ENCODE measurements at regions of chr20 and their contacts with region 1.

Region 1: GRCh38 chr20:37095599-37096414 is at the start of gene RBL1:
- DNase-seq: peak; percentile 60 to 81
- H3K4me3 ChIP-seq: peak within 1 kb of the TSS; percentile 99
- H3K27ac ChIP-seq: no peak within 1 kb of the TSS
- H3K4me1 ChIP-seq: peaks cover 14% of the 10 kb centered on the region
- H3K27me3 ChIP-seq: no peaks in the 10 kb centered on the region
- CTCF ChIP-seq: no peak; the same call in 1 of the 2 replicates
- total RNA-seq, gene RBL1: 14.6 and 23.0 TPM in 2 replicates

Region 2: DNA sequence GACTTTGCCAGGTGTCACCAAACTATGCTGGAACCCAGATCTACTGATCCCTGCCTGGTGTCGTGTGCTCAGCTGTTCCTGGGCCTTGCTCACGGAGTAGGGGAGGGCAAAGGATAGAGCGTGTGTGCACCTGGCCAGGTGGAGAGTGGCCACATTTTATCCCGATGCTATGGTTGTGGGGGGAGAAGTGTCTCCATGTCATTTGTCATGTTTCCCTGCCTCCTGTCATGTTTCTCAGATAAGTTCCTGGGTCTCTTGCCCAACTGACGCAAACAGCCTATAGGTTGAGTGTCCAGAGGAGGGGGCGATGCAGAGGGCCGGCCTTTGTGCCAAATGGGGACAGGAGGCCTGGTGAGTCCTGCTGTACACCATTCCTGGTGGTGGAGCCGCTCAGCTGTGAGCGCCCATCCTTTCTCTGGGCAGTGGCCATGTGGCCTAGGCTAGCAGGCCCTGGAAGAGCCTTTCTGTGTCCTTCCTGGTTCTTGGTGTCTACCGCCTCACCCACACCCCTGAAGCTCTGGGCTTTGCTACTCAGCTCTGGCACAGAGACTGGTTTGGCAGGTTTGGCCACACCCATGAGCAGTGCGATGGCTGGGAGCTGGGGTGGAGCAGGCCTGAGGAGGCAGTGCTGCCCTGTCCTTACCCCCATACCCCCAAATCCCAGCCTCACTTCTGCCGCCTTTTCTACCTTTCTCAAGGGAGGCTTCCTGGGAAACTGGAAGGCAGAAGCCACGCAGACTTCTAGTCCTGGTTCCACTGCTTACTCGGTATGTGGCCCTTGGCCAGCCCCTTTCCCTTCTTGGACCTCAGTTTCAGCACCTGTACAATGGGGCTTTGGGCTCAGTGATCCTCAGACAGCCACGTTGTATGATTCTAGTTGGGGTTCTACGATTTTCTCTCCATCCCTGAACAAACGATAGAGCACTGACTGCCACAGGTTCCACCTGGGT is 973.6 kb before region 1 on chr20:
- CTCF ChIA-PET with region 1: no interaction called
- POLR2A ChIA-PET with region 1: interaction called, 24 read pairs
- intact Hi-C with region 1: no loop called
- DNase-seq: peak; percentile 91 to 94
- H3K4me3 ChIP-seq: no peak overlapping the region
- H3K27ac ChIP-seq: peak overlapping the region; percentile 73
- H3K4me1 ChIP-seq: peaks cover 24% of the 10 kb centered on the region
- H3K27me3 ChIP-seq: no peaks in the 10 kb centered on the region
- CTCF ChIP-seq: no peak

Region 3: GRCh38 chr20:37336369-37337207 is 240.8 kb after region 1 on chr20:
- CTCF ChIA-PET with region 1: no interaction called
- POLR2A ChIA-PET with region 1: no interaction called
- intact Hi-C with region 1: no loop called
- DNase-seq: no peak
- H3K4me3 ChIP-seq: no peak overlapping the region
- H3K27ac ChIP-seq: no peak overlapping the region
- H3K4me1 ChIP-seq: peaks cover 22% of the 10 kb centered on the region
- H3K27me3 ChIP-seq: no peaks in the 10 kb centered on the region
- CTCF ChIP-seq: no peak